Activated CD4-positive, alpha-beta T cell treated with anti-CD3 and anti-CD28 coated beads, Interleukin-2, amount 10 ng/mL, durations not matched to agents 24 days and 14 days (primary cell): ENCODE measurements at regions of chrX and their contacts with region 1.

Region 1: DNA sequence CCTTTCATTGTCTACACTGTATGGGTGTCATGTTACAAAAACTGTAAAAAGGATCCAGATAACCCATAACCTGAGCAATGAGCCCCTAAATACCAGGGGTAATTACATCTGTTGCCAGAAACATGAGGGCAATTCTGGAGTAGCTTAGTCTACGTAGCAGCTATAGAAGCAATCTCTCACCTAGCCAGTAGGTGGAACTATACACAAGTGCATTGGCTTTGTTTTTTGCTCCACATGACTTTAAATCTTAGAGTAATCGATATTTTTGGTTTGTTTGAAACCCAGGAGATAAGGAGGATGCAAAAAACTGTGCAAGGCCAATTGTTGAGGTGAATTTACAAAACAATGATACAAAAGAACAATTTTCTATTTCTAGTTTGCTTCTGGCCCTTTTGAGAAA is 57.5 kb downstream of the GPR82 start:
- DNase-seq: peak; percentile 61
- H3K4me3 Mint-ChIP-seq: no peak overlapping the region
- H3K27ac Mint-ChIP-seq: no peak overlapping the region
- H3K4me1 Mint-ChIP-seq: no peaks in the 10 kb centered on the region
- H3K27me3 Mint-ChIP-seq: no peaks in the 10 kb centered on the region

Region 2: GRCh38 chrX:41259516-41259915 is 522.0 kb before region 1 on chrX:
- intact Hi-C with region 1: no loop called
- DNase-seq: no peak
- H3K4me3 Mint-ChIP-seq: no peak overlapping the region
- H3K27ac Mint-ChIP-seq: no peak overlapping the region
- H3K4me1 Mint-ChIP-seq: no peaks in the 10 kb centered on the region
- H3K27me3 Mint-ChIP-seq: peaks cover 2% of the 10 kb centered on the region

Region 3: GRCh38 chrX:43349363-43349762 is 1567.9 kb after region 1 on chrX:
- intact Hi-C with region 1: loop called (anchors 5 kb)
- DNase-seq: peak; percentile 73
- H3K4me3 Mint-ChIP-seq: no peak overlapping the region
- H3K27ac Mint-ChIP-seq: no peak overlapping the region
- H3K4me1 Mint-ChIP-seq: peaks cover 2% of the 10 kb centered on the region
- H3K27me3 Mint-ChIP-seq: no peaks in the 10 kb centered on the region